Heart right ventricle (tissue), 16 donors: ENCODE measurements at regions of chr9 and their contacts with region 1.

Region 1: DNA sequence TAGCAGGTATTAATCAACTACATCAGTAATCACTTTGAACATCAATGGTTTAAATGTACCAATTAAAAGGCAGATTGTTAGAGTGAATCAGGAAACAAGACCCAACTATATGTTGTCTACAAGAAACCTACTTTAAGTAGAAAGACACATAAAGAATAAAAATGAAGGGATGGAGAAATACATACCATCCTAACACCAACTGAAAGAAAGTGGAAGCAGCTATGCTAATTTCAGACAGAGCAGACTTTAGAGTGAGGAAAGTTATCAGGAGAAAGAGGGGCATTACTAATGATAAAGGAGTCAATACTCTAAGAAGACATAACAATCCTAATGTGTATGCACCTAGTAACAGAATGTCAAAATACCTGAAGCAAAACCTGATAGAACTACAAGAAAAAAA is 125.8 kb downstream of the NR6A1 start:
- DNase-seq: no peak
- ATAC-seq: no peak
- H3K4me3 ChIP-seq: no peak overlapping the region
- H3K27ac ChIP-seq: no peak overlapping the region
- H3K4me1 ChIP-seq: no peaks in the 10 kb centered on the region
- H3K27me3 ChIP-seq: no peaks in the 10 kb centered on the region
- CTCF ChIP-seq: no peak

Region 2: GRCh38 chr9:123669346-123669745 is 975.9 kb before region 1 on chr9:
- intact Hi-C with region 1: no loop called
- DNase-seq: no peak
- ATAC-seq: no peak
- H3K4me3 ChIP-seq: no peak overlapping the region
- H3K27ac ChIP-seq: no peak overlapping the region
- H3K4me1 ChIP-seq: no peaks in the 10 kb centered on the region
- H3K27me3 ChIP-seq: no peaks in the 10 kb centered on the region
- CTCF ChIP-seq: no peak

Region 3: GRCh38 chr9:124164811-124165210 is 480.5 kb before region 1 on chr9:
- intact Hi-C with region 1: loop called in 1 of 10 experiments (anchors 5 kb)
- DNase-seq: peak in 1 of 2 donors; percentile 8
- ATAC-seq: peak in 2 of 8 donors; percentile 38 to 82
- H3K4me3 ChIP-seq: no peak overlapping the region
- H3K27ac ChIP-seq: no peak overlapping the region
- H3K4me1 ChIP-seq: no peaks in the 10 kb centered on the region
- H3K27me3 ChIP-seq: peaks cover 0 to 7% (median 0%) of the 10 kb centered on the region in 7 donors
- CTCF ChIP-seq: no peak

Region 4: GRCh38 chr9:124583128-124583527 is 62.1 kb before region 1 on chr9:
- intact Hi-C with region 1: no loop called
- DNase-seq: no peak
- ATAC-seq: no peak
- H3K4me3 ChIP-seq: no peak overlapping the region
- H3K27ac ChIP-seq: no peak overlapping the region
- H3K4me1 ChIP-seq: no peaks in the 10 kb centered on the region
- H3K27me3 ChIP-seq: no peaks in the 10 kb centered on the region
- CTCF ChIP-seq: no peak

Region 5: GRCh38 chr9:124675261-124676158 is 30.2 kb after region 1 on chr9:
- intact Hi-C with region 1: no loop called
- DNase-seq: no peak
- ATAC-seq: no peak
- H3K4me3 ChIP-seq: no peak overlapping the region
- H3K27ac ChIP-seq: no peak overlapping the region
- H3K4me1 ChIP-seq: peaks cover 0 to 28% (median 9%) of the 10 kb centered on the region in 9 donors
- H3K27me3 ChIP-seq: no peaks in the 10 kb centered on the region
- CTCF ChIP-seq: peak in 1 of 9 donors; percentile 13